ENCODE measurements at regions of chr11 and their contacts with region 1.

Region 1: GRCh38 chr11:86990515-86990914 is 35.3 kb upstream of the FZD4 start:
- DNase-seq: no peak
- ATAC-seq: no peak
- H3K4me3 Mint-ChIP-seq: no peak overlapping the region
- H3K27ac Mint-ChIP-seq: no peak overlapping the region
- H3K4me1 Mint-ChIP-seq: no peaks in the 10 kb centered on the region
- H3K27me3 Mint-ChIP-seq: peaks cover 3% of the 10 kb centered on the region
- CTCF ChIP-seq: no peak

Region 2: DNA sequence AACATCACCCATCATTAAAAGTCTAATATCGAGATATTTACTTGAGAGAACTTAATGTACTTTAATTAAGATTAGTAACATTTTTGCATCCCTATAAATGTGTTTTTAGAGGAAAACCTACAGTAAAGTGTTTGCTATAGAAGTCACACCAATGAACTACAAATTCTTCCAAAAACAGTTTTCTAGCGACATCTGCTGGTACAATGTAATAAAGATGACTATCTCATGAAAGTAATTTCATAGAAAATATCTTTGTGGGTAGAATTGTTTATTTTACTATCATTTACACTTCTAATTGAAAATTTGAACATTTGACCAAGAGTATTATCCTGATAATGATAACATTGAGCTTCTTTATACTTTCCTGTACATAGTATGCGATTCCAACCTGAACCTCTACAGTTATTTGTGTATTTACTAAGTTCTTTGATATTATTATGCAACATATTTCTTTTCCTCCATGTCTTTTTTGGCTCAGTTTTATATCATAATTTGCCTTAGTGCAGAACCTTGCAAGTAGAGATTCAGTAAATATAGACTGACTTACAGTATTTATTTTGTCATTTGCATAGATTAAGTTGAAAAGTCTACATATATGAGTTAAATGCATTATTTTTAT is 299.9 kb after region 1 on chr11:
- CTCF ChIA-PET with region 1: interaction called, 20 read pairs
- POLR2A ChIA-PET with region 1: no interaction called
- intact Hi-C with region 1: no loop called
- DNase-seq: no peak
- ATAC-seq: no peak
- H3K4me3 Mint-ChIP-seq: no peak overlapping the region
- H3K27ac Mint-ChIP-seq: no peak overlapping the region
- H3K4me1 Mint-ChIP-seq: no peaks in the 10 kb centered on the region
- H3K27me3 Mint-ChIP-seq: no peaks in the 10 kb centered on the region
- CTCF ChIP-seq: peak; percentile 84